Mammary epithelial cell (primary cell): ENCODE measurements at regions of chr22 and their contacts with region 1.

Region 1: GRCh38 chr22:32528984-32529982 is 54.7 kb downstream of the FBXO7 start:
- DNase-seq: peak; percentile 57
- H3K4me3 ChIP-seq: no peak overlapping the region
- H3K27ac ChIP-seq: no peak overlapping the region
- H3K4me1 ChIP-seq: peaks cover 22% of the 10 kb centered on the region
- H3K27me3 ChIP-seq: no peaks in the 10 kb centered on the region
- CTCF ChIP-seq: peak; percentile 86 to 87

Region 2: DNA sequence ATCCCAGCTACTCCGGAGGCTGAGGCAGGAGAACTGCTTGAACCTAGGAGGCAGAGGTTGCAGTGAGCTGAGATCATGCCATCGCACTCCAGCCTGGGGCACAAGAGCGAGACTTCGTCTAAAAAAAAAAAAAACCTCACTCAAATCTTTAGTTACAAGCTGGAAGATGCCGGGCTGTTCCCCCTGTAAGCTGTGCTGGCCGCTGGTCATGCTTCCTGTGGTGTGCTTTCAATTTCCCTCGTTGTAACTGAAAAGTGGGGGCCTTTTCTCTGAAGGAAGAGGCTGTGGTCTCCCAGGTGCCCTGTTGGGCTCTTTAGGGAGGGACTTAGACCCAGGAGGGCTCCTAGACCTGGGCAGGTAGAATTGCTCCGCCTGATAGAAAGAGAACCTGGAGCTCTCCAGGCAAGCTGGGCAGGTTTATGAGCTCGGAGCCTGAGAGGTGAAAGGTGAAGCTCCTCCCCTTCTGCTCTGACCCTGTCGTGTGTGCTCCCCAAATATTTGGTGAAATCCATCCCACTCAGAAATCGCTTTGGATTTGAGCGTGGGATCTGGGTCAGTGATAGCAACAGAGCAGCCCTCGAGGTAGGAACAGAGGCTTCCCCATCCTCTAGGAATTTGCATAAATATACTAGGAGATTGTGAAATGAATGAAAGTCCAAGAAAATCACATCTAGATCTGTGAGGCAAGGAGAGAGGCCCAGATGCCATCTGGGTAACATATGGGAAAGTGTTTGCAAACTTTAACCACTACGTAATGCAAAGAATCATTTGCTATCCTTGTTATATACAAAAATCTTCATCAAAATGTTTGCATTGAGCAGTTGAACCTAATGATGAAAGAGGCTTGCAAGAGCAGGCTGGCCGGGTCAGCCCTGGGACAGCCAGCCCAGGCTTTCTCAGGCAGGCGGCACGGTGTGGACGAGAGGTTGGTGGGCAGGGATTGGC is 99.6 kb after region 1 on chr22:
- CTCF ChIA-PET with region 1: no interaction called
- dilution Hi-C with region 1: no loop called
- in situ Hi-C with region 1: no loop called
- intact Hi-C with region 1: loop called (anchors 5 kb)
- DNase-seq: no peak
- H3K4me3 ChIP-seq: no peak overlapping the region
- H3K27ac ChIP-seq: no peak overlapping the region
- H3K4me1 ChIP-seq: no peaks in the 10 kb centered on the region
- H3K27me3 ChIP-seq: no peaks in the 10 kb centered on the region
- CTCF ChIP-seq: no peak

Region 3: GRCh38 chr22:32660292-32660691 is 131.0 kb after region 1 on chr22:
- CTCF ChIA-PET with region 1: interaction called, 4 read pairs
- dilution Hi-C with region 1: no loop called
- in situ Hi-C with region 1: no loop called
- intact Hi-C with region 1: loop called (anchors 1 kb)
- DNase-seq: peak; percentile 62
- H3K4me3 ChIP-seq: no peak overlapping the region
- H3K27ac ChIP-seq: no peak overlapping the region
- H3K4me1 ChIP-seq: peaks cover 24% of the 10 kb centered on the region
- H3K27me3 ChIP-seq: no peaks in the 10 kb centered on the region
- CTCF ChIP-seq: peak; percentile 72 to 86

Region 4: GRCh38 chr22:32803020-32803754 is 273.9 kb after region 1 on chr22:
- CTCF ChIA-PET with region 1: no interaction called
- dilution Hi-C with region 1: no loop called
- in situ Hi-C with region 1: loop called (anchors 5 kb)
- intact Hi-C with region 1: loop called (anchors 1 kb)
- DNase-seq: peak; percentile 68
- H3K4me3 ChIP-seq: peak overlapping the region; percentile 61 to 89 (median 68)
- H3K27ac ChIP-seq: peak overlapping the region; percentile 41
- H3K4me1 ChIP-seq: peaks cover 21% of the 10 kb centered on the region
- H3K27me3 ChIP-seq: no peaks in the 10 kb centered on the region
- CTCF ChIP-seq: no peak

Region 5: GRCh38 chr22:32985899-32986765 is 456.8 kb after region 1 on chr22:
- CTCF ChIA-PET with region 1: no interaction called
- dilution Hi-C with region 1: no loop called
- in situ Hi-C with region 1: loop called in 1 of 2 experiments (anchors 10 kb)
- intact Hi-C with region 1: loop called (anchors 5 kb)
- DNase-seq: peak; percentile 75
- H3K4me3 ChIP-seq: no peak overlapping the region
- H3K27ac ChIP-seq: peak overlapping the region; percentile 80
- H3K4me1 ChIP-seq: peaks cover 34% of the 10 kb centered on the region
- H3K27me3 ChIP-seq: no peaks in the 10 kb centered on the region
- CTCF ChIP-seq: peak; percentile 86 to 92

Region 6: GRCh38 chr22:33049119-33049729 is 519.9 kb after region 1 on chr22:
- CTCF ChIA-PET with region 1: no interaction called
- dilution Hi-C with region 1: no loop called
- in situ Hi-C with region 1: no loop called
- intact Hi-C with region 1: loop called (anchors 1 kb)
- DNase-seq: peak; percentile 41
- H3K4me3 ChIP-seq: no peak overlapping the region
- H3K27ac ChIP-seq: no peak overlapping the region
- H3K4me1 ChIP-seq: no peaks in the 10 kb centered on the region
- H3K27me3 ChIP-seq: peaks cover 10% of the 10 kb centered on the region
- CTCF ChIP-seq: peak; percentile 95

Region 7: GRCh38 chr22:33202455-33202854 is 673.2 kb after region 1 on chr22:
- CTCF ChIA-PET with region 1: no interaction called
- dilution Hi-C with region 1: no loop called
- in situ Hi-C with region 1: no loop called
- intact Hi-C with region 1: loop called (anchors 2 kb)
- DNase-seq: no peak
- H3K4me3 ChIP-seq: no peak overlapping the region
- H3K27ac ChIP-seq: no peak overlapping the region
- H3K4me1 ChIP-seq: no peaks in the 10 kb centered on the region
- H3K27me3 ChIP-seq: peaks cover 4% of the 10 kb centered on the region
- CTCF ChIP-seq: no peak